OCI-LY7 (cell line): ENCODE measurements at regions of chr1 and their contacts with region 1.

Region 1: DNA sequence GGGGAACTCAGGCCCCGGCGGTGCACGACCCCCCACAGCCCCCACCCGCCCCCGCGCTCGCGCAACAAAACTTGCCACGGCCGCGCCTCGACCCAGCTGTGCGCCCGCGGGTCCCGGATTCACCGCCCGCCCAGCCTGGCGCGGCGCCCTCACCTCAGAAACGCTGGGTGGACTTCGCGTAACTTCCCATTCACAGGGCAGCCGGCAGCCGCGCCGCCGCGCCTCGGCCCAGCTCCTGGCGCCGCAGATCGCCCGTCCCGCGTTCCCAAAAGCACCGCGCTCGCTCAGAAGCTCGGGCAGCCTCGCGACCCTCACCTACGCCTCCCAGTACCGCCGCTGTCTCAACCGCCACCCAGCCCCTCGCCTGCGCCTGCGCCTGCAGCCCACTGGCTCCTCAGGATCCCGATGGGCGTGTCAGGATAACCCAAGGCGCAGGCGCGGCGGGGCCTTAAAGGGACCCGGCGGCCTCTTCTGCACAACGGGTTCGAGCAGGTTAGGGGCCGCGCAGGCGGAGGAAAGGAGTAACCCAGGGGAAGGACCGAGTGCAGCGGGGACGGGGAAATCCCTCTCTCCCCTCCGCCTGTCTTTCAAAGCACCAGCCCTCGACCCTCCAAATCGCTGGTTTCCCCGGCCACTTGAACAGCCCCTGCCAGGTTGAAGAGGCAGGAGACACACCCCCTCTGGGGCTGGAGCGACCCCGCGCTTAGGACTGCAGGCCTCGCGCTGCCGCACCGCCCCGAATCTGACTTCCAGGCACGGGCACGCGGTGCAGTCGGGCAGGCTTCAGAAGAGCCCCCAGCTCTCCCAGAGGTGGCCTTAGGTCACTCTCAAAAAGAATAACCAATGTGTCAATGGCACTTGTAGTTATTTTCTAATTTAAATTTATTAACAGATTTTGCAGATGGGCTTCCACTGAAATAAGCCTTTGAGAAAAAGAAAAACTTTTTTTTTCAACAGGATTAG is at the start of gene NBPF1:
- DNase-seq: peak; percentile 98
- H3K4me3 ChIP-seq: peak within 1 kb of the TSS; percentile 69
- H3K27ac ChIP-seq: no peak within 1 kb of the TSS
- H3K4me1 ChIP-seq: peaks cover 22% of the 10 kb centered on the region
- CTCF ChIP-seq: no peak
- total RNA-seq, gene NBPF1: 9.0 and 11.0 TPM in 2 replicates

Region 2: GRCh38 chr1:16625497-16626408 is 12.3 kb after region 1 on chr1:
- CTCF ChIA-PET with region 1: interaction called, 4 read pairs
- POLR2A ChIA-PET with region 1: interaction called, 11 read pairs
- intact Hi-C with region 1: no loop called
- DNase-seq: no peak
- H3K4me3 ChIP-seq: no peak overlapping the region
- H3K27ac ChIP-seq: no peak overlapping the region
- H3K4me1 ChIP-seq: no peaks in the 10 kb centered on the region
- CTCF ChIP-seq: no peak

Region 3: GRCh38 chr1:16644193-16644481 is 30.7 kb after region 1 on chr1:
- CTCF ChIA-PET with region 1: no interaction called
- POLR2A ChIA-PET with region 1: interaction called, 3 read pairs
- intact Hi-C with region 1: loop called (anchors 2 kb)
- DNase-seq: no peak
- H3K4me3 ChIP-seq: peak overlapping the region; percentile 71
- H3K27ac ChIP-seq: peak overlapping the region; percentile 38
- H3K4me1 ChIP-seq: peaks cover 26% of the 10 kb centered on the region
- CTCF ChIP-seq: no peak

Region 4: DNA sequence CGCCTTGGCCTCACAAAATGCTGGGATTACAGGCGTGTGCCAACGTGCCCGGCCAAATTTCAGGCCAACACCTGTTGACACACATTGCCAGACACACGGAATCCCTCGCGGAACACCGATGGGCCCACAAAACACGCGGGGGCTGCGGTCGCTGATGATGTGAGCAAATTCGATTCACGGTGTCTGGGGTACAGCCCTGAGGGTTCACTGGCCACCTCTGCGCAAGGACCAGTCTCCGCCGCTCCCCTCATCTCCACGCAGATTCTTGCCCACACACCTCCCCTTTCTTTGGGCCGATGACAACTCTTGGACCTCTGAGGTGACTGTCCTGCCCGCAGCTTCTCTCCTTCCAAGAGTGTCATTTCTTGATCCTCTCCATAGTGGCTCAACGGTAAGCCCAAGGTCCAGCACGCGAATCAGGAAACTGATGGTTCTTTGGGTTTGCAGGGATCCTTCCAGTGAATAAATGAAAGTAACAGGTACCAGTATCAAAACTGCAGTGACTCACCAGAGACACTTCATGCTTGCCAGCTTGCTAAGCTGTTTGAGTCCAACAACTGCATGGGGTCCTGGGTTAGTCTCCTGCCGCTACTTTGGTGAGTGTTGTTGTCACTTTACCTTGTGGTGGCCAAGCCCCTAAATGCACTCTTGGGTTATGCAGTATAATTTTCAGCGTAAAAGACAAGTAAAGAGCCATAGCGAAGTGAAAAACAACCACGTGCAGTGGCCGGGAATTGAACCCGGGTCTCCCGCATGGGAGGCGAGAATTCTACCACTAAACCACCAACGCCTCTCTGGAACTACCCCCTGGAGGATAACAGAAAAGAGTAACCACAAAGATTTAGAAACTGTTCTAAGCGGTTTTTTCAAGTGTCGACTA is 64.3 kb after region 1 on chr1:
- CTCF ChIA-PET with region 1: no interaction called
- POLR2A ChIA-PET with region 1: no interaction called
- intact Hi-C with region 1: no loop called
- DNase-seq: peak; percentile 16
- H3K4me3 ChIP-seq: no peak overlapping the region
- H3K27ac ChIP-seq: no peak overlapping the region
- H3K4me1 ChIP-seq: peaks cover 5% of the 10 kb centered on the region
- CTCF ChIP-seq: no peak